ENCODE measurements at regions of chr3 and their contacts with region 1.

Region 1: DNA sequence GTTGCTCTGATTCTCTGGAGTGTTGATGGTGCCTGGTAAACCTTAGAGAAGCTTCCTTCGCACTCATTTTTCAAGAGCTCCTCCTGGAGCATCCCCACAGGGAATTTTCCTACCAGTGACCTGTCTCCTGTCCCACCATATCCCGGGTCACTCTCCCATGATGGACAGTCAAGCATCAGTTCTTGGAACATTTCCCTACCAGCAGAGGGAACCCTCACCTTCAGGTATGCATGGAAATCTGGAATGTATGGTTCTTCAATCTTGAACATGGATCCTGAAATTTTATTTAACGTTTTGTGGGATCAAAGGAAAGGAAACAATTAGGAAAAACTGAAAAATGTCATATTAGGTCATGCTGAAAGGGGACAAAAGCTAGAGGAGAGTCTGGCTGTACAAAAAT is 153.8 kb downstream of the SPATA16 start:
- DNase-seq: peak; percentile 16
- ATAC-seq: peak; percentile 87
- H3K4me3 ChIP-seq: no peak overlapping the region
- H3K27ac ChIP-seq: no peak overlapping the region
- H3K4me1 ChIP-seq: no peaks in the 10 kb centered on the region
- H3K27me3 ChIP-seq: no peaks in the 10 kb centered on the region
- CTCF ChIP-seq: peak; percentile 59
- EP300 ChIP-seq: no peak
- POLR2A ChIP-seq: no peak
- RAD21 ChIP-seq: no peak

Region 2: GRCh38 chr3:172953571-172953970 is 33.7 kb before region 1 on chr3:
- CTCF ChIA-PET with region 1: no interaction called
- POLR2A ChIA-PET with region 1: no interaction called
- in situ Hi-C with region 1: no loop called
- intact Hi-C with region 1: no loop called
- DNase-seq: no peak
- ATAC-seq: no peak
- H3K4me3 ChIP-seq: no peak overlapping the region
- H3K27ac ChIP-seq: no peak overlapping the region
- H3K4me1 ChIP-seq: no peaks in the 10 kb centered on the region
- H3K27me3 ChIP-seq: no peaks in the 10 kb centered on the region; a peak in 1 of 5 replicates
- CTCF ChIP-seq: no peak
- EP300 ChIP-seq: no peak
- POLR2A ChIP-seq: no peak
- RAD21 ChIP-seq: no peak

Region 3: GRCh38 chr3:173000553-173000952 is 13.3 kb after region 1 on chr3:
- CTCF ChIA-PET with region 1: no interaction called
- POLR2A ChIA-PET with region 1: no interaction called
- in situ Hi-C with region 1: no loop called
- intact Hi-C with region 1: no loop called
- DNase-seq: no peak
- ATAC-seq: no peak
- H3K4me3 ChIP-seq: no peak overlapping the region
- H3K27ac ChIP-seq: no peak overlapping the region
- H3K4me1 ChIP-seq: no peaks in the 10 kb centered on the region
- H3K27me3 ChIP-seq: no peaks in the 10 kb centered on the region
- CTCF ChIP-seq: no peak
- EP300 ChIP-seq: no peak
- POLR2A ChIP-seq: no peak
- RAD21 ChIP-seq: no peak

Region 4: DNA sequence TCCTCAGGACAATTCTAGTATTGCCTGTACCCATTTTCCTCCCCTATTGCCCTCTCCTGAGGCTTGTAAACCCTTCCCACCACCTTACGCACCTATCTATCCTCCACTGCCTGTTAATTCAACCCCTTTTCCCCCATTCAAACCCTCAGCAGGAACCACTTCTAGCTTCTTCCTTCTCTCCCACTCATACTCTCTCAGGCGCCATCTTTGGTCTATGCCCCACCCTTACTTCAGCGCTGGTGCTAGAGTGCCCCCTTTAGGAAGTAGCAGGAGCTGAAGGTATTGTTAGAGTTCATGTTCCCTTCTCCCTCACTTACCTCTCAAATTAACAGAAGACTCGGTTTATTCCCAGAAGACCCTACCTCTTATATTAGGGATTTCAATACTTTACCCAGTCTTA is 288.5 kb after region 1 on chr3:
- CTCF ChIA-PET with region 1: no interaction called
- POLR2A ChIA-PET with region 1: no interaction called
- in situ Hi-C with region 1: no loop called
- intact Hi-C with region 1: loop called (anchors 2 kb)
- DNase-seq: peak; percentile 11
- ATAC-seq: peak; percentile 59
- H3K4me3 ChIP-seq: no peak overlapping the region
- H3K27ac ChIP-seq: no peak overlapping the region
- H3K4me1 ChIP-seq: no peaks in the 10 kb centered on the region
- H3K27me3 ChIP-seq: no peaks in the 10 kb centered on the region
- CTCF ChIP-seq: peak; percentile 35
- EP300 ChIP-seq: no peak
- POLR2A ChIP-seq: no peak
- RAD21 ChIP-seq: no peak

Measured in HepG2 (cell line).